ENCODE measurements at regions of chr3 and their contacts with region 1.

Region 1: DNA sequence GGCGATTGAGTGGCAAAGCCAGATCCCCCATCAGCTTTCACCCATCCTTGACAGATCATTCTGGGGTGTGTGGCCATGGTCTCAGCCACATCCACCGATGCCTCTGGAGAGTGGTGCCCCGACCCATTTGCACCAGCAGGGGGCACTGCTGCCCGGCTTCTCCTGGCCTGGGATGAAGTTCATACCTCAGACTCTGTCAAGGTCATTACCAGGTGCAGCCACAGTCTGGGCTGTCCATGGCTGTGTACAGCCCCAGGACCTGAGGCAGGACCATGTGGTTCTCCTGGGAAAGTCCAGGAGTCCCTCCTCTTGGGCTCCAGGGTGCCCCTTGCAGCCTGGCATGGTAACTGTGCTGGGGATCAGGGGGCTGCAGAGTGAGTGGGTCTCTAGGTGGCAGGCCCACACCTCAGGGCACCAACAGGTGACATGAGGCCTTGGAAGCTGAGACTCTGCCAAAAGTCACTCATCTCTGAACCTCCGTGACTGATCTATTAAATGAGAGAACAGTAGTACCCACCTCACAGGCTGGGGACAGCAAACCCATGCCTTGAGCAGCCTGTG is 67.2 kb downstream of the CACNA2D2 start:
- H3K4me3 ChIP-seq: no peak overlapping the region
- H3K27ac ChIP-seq: no peak overlapping the region
- H3K4me1 ChIP-seq: no peaks in the 10 kb centered on the region
- CTCF ChIP-seq: peak; percentile 65

Region 2: DNA sequence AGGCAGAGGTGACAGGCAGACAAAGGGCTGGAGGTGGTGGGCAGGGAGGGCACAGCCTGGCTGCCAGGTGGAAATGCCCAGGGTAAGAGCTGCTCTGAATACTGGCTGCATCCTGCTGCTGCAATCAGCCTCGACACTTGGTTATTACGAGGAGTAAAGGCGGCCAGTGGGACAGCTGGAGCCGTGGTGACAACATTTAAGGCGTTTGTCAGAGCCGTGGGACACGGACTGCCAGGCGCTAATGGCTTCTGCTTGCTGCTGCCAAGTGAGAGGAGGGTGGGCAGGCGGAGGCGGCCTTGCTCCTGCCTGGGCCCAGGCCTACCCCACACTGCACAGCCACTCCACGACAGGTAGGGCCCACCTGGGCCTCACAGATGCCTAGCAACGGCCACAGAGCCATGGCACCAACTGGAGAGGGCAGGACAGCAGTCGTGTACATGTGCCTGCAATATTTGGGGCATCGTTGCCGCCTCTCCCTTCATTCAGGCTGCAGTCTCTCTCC is 27.7 kb before region 1 on chr3:
- CTCF ChIA-PET with region 1: no interaction called
- POLR2A ChIA-PET with region 1: no interaction called
- H3K4me3 ChIP-seq: no peak overlapping the region
- H3K27ac ChIP-seq: no peak overlapping the region
- H3K4me1 ChIP-seq: no peaks in the 10 kb centered on the region
- CTCF ChIP-seq: no peak

Region 3: DNA sequence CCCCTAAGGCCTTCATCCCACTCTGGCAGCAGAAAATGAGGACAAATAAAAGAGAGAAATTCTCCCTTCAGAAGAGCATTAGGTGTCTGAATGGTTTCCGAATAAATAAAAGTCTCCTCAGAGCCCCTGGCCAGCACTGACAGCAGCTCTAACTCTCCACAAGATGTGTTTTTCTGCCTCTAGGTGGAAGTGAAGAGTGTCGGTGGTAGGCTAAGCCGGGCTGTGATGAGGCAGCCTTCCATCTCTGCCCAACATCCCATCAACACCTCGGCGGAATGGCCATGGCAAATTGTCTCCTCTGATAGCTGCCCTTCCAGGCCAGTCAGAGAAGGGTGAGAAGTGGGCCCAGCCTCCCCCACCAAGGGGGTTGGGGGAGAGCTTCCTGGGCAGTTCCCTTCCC is 73.5 kb after region 1 on chr3:
- CTCF ChIA-PET with region 1: no interaction called
- POLR2A ChIA-PET with region 1: no interaction called
- H3K4me3 ChIP-seq: no peak overlapping the region
- H3K27ac ChIP-seq: no peak overlapping the region
- H3K4me1 ChIP-seq: no peaks in the 10 kb centered on the region
- CTCF ChIP-seq: no peak

Region 4: DNA sequence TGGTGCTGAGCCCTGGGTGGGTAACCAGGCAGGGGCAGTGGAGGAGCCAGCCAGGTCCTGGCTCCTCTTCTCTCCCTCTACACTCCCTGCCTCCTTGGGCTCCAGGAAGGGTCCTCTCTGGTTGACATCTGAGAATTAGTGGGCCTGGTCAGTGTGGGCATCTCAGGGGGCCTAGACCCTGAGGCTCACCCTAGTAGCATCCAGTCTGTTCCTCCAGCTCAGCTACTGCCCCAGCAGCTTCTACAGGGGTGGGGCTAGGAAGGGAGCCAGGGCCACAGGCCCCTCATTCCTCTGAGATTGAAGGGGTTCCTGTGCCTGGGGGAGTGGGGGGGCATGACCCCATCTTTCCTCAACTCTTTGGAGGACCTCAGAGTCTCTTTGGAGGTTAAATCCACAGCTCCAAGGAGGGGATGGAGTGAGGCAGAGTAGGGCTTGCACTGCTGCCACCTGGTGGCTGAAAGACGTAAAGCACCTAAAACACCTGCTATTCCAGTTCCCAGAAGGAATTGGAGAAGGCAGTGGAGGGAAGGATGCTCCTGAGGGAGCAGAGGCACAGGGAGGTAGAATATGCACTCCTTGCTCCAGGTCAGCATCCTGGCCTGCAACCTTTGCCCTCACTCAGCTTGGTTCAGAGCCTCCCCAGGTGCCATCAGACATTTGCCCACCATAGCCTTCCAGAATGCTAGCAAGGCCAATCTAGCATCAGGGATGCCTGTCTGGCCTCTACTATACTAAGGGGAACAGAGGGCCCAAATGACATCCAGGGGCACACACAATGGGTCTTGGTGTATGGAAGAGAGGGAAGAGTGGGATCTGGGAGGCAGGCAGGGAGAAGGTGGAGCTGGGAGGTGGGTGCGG is 106.2 kb after region 1 on chr3:
- CTCF ChIA-PET with region 1: interaction called, 18 read pairs
- POLR2A ChIA-PET with region 1: no interaction called
- H3K4me3 ChIP-seq: no peak overlapping the region
- H3K27ac ChIP-seq: no peak overlapping the region
- H3K4me1 ChIP-seq: no peaks in the 10 kb centered on the region
- CTCF ChIP-seq: peak; percentile 70

Region 5: GRCh38 chr3:50550079-50550741 is 114.0 kb after region 1 on chr3:
- CTCF ChIA-PET with region 1: interaction called, 10 read pairs
- POLR2A ChIA-PET with region 1: no interaction called
- H3K4me3 ChIP-seq: no peak overlapping the region
- H3K27ac ChIP-seq: no peak overlapping the region
- H3K4me1 ChIP-seq: no peaks in the 10 kb centered on the region
- CTCF ChIP-seq: no peak